ENCODE measurements at regions of chr11 and their contacts with region 1.

Region 1: DNA sequence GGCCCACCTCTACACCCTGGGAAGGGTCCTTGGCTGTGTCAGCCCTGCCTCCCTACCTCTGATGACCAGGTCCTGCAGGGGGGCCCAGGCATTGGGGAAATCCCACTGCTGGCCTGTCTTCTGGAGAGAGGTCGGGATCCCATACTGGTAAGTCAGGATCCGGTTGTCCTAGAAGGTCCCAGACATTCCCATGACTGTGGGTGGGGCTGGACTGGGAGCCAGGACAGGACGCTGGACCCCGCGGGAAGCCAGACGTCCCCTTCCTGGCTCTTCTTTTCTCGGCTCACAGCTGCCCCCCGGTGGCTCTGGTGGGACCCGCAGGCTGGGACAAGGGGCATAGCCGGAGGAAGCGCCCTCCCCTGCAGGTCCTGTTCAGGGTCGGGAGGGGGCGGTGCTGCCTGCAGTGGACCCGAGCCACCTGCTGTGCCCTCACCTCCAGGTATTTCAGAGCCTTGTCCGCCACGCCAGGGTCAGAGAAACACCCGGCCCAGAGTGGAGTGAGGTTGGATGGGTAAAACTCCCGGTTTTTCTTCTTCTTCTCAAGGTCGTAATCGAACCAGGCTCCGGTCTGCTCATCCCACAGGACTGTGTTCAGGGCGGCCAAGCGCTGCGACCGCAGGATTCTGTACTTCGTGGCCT is 20.0 kb downstream of the TREH start:
- DNase-seq: no peak
- H3K4me3 ChIP-seq: no peak overlapping the region
- H3K27me3 ChIP-seq: no peaks in the 10 kb centered on the region
- CTCF ChIP-seq: peak; percentile 99

Region 2: DNA sequence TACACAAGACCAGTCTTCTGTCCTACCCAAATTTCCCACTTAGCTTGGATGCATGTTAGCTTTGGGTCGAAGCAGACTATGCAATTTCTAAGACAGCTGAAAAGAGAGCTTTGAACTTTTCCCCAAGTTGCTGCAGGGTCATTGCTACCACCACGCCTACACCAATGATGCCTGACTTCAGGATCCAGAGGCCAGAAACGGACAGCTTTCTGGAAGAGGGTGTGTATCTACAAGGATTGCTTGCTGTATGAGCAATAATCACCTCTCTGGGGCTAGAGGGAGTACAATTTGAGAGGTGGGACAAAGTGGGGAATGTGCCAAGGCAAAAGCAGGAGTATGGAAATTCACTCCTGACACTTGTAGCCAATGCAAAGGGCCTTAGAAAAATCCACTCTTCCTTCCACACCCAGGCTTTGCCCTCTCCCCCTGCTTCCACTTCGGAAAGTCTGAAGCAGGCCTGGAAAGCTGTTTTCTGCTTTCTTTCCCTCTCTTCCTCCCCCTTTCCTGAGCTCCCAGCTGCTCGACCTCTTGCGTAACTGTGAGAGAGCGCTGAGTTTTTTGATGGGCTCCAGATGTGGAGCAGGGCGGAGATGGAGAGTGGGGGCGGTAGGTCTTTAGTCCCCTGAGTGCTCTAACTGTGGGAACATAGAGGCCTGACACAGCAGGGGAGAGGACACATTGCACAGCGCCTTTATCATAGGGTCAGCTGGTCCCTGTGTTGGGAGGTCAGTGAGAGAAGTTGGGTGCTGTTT is 54.1 kb before region 1 on chr11:
- CTCF ChIA-PET with region 1: interaction called, 56 read pairs
- POLR2A ChIA-PET with region 1: no interaction called
- DNase-seq: peak; percentile 87
- H3K4me3 ChIP-seq: no peak overlapping the region
- H3K27me3 ChIP-seq: no peaks in the 10 kb centered on the region
- CTCF ChIP-seq: no peak

Region 3: GRCh38 chr11:118621071-118621783 is 38.2 kb before region 1 on chr11:
- CTCF ChIA-PET with region 1: interaction called, 17 read pairs
- POLR2A ChIA-PET with region 1: no interaction called
- DNase-seq: no peak
- H3K4me3 ChIP-seq: peak overlapping the region; percentile 63
- H3K27me3 ChIP-seq: no peaks in the 10 kb centered on the region
- CTCF ChIP-seq: no peak

Region 4: DNA sequence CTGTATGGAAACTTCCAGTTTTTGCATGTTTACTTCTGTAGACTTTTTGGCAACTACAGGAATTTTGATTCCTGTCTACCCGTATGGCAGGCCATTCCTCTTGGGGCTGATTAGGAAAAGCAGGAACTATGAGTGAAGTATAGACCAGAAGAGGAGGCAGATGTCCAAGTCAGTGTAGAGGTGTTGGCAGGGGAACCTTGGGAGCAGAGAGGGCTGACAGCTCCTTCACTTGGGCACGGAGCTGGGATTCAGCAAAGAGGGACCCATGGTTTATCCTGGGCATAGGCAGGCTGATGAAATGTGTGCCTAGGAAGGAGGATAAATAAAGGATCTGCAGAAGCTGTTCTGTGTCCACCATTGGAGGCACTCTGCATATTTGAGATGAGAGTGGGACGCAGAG is 13.0 kb before region 1 on chr11:
- CTCF ChIA-PET with region 1: interaction called, 12 read pairs
- POLR2A ChIA-PET with region 1: no interaction called
- DNase-seq: no peak
- H3K4me3 ChIP-seq: no peak overlapping the region
- H3K27me3 ChIP-seq: no peaks in the 10 kb centered on the region
- CTCF ChIP-seq: no peak

Region 5: DNA sequence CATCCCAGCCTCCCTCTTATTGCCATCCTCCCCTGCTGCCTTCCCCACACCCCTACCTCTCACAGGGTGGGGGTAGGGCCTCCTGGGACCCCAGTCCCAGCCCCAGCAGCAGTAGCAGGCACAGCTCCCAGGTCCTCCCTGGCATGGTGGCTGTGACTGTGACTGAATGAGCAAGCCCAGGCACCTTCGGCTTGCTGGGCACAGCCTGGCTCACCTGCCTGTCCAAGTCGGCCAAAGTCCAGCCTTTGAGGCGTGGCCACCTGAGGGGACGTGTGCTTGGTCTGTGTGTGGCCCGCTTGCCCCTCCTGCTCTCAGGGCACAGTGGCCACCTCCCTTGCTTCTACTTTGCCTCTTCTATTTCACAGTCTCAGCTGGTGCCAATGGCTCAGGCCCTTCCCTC is 20.1 kb after region 1 on chr11 and contains the start of gene TREH:
- CTCF ChIA-PET with region 1: interaction called, 14 read pairs
- POLR2A ChIA-PET with region 1: no interaction called
- DNase-seq: no peak
- H3K4me3 ChIP-seq: no peak within 1 kb of the TSS
- H3K27me3 ChIP-seq: peaks cover 6% of the 10 kb centered on the region; the same call in 1 of the 2 replicates
- CTCF ChIP-seq: no peak
- polyA plus RNA-seq, gene TREH: not detected in 2 replicates